Ovary (tissue), 10 donors: ENCODE measurements at regions of chr1 and their contacts with region 1.

Region 1: GRCh38 chr1:20521960-20522861 is 14.3 kb upstream of the MUL1 start:
- DNase-seq: peak; percentile 75 to 88 (median 80)
- H3K4me3 ChIP-seq: no peak overlapping the region
- H3K27ac ChIP-seq: no peak overlapping the region
- H3K4me1 ChIP-seq: no peaks in the 10 kb centered on the region
- H3K27me3 ChIP-seq: no peaks in the 10 kb centered on the region
- CTCF ChIP-seq: peak; percentile 80 to 85 (median 82)
- EP300 ChIP-seq: no peak
- POLR2A ChIP-seq: no peak

Region 2: DNA sequence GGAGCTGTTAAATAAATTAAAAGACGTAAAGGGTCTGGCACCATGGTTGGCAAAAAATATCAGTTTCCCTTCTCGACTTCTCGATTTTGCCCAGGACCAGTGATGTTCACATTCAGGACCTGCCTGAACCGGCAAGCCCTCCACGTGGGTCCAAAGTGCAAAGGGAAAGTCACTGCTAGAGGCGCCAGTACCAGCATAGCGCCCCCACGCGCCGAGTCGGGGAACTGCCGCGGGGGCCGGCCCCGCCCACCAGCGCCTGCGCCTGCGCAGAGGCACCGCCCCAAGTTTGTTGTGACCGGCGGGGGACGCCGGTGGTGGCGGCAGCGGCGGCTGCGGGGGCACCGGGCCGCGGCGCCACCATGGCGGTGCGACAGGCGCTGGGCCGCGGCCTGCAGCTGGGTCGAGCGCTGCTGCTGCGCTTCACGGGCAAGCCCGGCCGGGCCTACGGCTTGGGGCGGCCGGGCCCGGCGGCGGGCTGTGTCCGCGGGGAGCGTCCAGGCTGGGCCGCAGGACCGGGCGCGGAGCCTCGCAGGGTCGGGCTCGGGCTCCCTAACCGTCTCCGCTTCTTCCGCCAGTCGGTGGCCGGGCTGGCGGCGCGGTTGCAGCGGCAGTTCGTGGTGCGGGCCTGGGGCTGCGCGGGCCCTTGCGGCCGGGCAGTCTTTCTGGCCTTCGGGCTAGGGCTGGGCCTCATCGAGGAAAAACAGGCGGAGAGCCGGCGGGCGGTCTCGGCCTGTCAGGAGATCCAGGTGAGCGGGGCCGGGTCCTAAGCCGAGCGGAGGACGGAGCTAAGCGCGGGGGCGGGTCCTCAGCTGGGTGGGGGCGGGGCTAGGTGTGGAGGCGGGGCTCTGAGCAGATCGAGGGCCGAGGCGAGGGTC is 111.2 kb after region 1 on chr1 and contains the start of gene PINK1:
- intact Hi-C with region 1: loop called in 2 of 4 experiments (anchors 2 to 5 kb)
- DNase-seq: peak; percentile 74 to 93 (median 80)
- H3K4me3 ChIP-seq: peak within 1 kb of the TSS; percentile 77
- H3K27ac ChIP-seq: peak within 1 kb of the TSS; percentile 59 to 86
- H3K4me1 ChIP-seq: peaks cover 4% of the 10 kb centered on the region
- H3K27me3 ChIP-seq: no peaks in the 10 kb centered on the region
- CTCF ChIP-seq: peak; percentile 95 to 97 (median 97)
- EP300 ChIP-seq: no peak
- POLR2A ChIP-seq: no peak
- total RNA-seq, gene PINK1: 40.8 to 70.5 (median 59.4) TPM

Region 3: DNA sequence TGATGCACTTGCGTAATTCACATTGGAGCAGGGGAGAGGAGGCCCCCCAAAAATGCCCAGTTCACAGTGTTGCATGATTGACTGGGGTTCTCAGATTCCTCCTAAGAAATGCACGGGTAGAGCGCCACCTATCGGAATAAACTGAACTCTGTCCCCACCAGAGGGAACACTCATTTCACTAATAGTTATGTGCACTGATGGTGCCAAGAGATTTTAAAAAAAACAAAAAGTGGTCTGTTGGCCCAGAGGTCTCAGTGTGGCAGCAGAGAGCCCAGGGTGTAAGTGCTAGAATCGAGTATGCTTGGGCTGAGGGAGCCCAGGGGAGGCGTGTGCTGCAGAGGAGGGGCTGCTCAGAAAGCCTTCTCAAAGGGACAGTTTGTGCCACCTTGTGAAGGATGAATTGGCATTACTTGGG is 118.0 kb after region 1 on chr1:
- intact Hi-C with region 1: loop called (anchors 2 to 5 kb)
- DNase-seq: peak in 1 of 5 donors; percentile 43
- H3K4me3 ChIP-seq: no peak overlapping the region
- H3K27ac ChIP-seq: no peak overlapping the region
- H3K4me1 ChIP-seq: no peaks in the 10 kb centered on the region
- H3K27me3 ChIP-seq: no peaks in the 10 kb centered on the region
- CTCF ChIP-seq: peak; percentile 18 to 44 (median 24)
- EP300 ChIP-seq: no peak
- POLR2A ChIP-seq: no peak

Region 4: DNA sequence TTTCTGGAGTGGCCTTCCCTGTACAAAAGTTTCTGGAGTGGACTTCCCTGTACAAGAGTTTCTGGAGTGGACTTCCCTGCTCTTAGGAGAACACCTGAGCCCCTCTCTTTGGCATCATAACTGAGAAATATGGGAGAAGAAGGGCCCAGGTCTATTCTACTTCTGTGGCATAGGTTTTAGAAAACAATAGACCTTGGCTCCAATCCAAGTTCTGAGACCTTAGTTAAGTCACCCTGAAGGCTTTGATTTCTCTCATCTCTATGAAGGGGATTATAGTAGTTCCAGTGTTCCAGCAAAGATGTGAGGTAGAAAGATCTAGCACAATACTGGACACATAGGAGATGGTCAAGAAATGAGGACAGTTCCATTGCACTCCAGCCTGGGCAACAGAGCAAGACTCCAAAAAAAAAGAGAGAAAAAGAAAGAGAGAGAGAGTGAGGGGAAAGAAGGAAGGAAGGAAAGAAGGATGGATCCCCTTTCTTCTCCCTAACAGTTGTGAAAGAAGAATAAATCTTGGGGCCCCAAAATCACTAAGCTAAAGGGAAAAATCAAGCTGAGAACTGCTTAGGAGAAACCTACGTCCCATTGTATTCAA is 667.8 kb after region 1 on chr1:
- intact Hi-C with region 1: loop called in 2 of 4 experiments (anchors 5 to 10 kb)
- DNase-seq: no peak
- H3K4me3 ChIP-seq: no peak overlapping the region
- H3K27ac ChIP-seq: no peak overlapping the region
- H3K4me1 ChIP-seq: no peaks in the 10 kb centered on the region
- H3K27me3 ChIP-seq: no peaks in the 10 kb centered on the region
- CTCF ChIP-seq: no peak
- EP300 ChIP-seq: no peak
- POLR2A ChIP-seq: no peak

Region 5: DNA sequence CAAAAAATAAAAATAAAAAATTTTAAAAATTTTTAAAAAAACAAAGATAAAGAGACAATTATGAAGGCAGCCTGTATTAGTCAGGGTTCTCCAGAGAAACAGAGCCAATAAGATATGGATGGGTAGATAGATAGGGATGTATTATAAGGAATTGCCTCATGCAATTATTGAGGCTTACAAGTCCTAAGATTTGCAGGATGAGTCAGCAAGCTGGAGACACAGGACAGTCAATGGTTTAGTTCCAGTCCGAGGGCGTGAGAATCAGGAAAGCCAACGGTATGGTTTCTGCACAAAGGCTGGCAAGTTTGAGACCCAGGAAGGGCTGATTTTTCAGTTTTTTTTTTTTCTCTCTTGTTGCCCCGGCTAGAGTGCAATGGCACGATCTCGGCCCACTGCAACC is 678.6 kb after region 1 on chr1:
- intact Hi-C with region 1: loop called in 2 of 4 experiments (anchors 5 to 10 kb)
- DNase-seq: no peak
- H3K4me3 ChIP-seq: no peak overlapping the region
- H3K27ac ChIP-seq: no peak overlapping the region
- H3K4me1 ChIP-seq: no peaks in the 10 kb centered on the region
- H3K27me3 ChIP-seq: no peaks in the 10 kb centered on the region
- CTCF ChIP-seq: no peak
- EP300 ChIP-seq: no peak
- POLR2A ChIP-seq: no peak